Heart left ventricle (tissue), 16 donors: ENCODE measurements at regions of chr18 and their contacts with region 1.

Region 1: DNA sequence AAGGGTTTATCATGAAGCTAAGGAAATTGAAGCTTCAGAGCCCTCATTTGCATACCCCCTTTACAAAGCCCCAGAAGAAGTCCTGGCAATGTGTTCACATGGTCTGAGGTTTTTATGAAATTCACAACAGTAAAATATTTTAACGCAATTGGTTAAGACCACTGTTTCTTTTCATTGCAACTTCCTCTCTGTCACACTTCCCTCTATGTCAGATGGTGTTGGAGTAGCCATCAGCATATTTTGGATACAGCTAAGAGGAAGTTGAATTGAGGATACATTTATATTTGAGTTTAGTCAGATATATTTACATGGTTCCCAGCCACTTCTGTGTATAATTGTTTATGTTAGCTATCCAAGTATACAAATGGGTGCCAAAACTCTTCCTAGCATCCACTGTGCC is 170.0 kb downstream of the TXNL1 start:
- DNase-seq: no peak
- ATAC-seq: peak in 3 of 4 donors; percentile 45 to 68 (median 60)
- H3K4me3 ChIP-seq: no peak overlapping the region
- H3K27ac ChIP-seq: peak overlapping the region in 2 of 12 donors; percentile 36 to 87
- H3K4me1 ChIP-seq: peaks cover 0 to 17% (median 0%) of the 10 kb centered on the region in 12 donors
- H3K27me3 ChIP-seq: no peaks in the 10 kb centered on the region
- CTCF ChIP-seq: no peak
- POLR2A ChIP-seq: no peak

Region 2: GRCh38 chr18:56413862-56414261 is 54.5 kb before region 1 on chr18:
- intact Hi-C with region 1: no loop called
- DNase-seq: no peak
- ATAC-seq: no peak
- H3K4me3 ChIP-seq: no peak overlapping the region
- H3K27ac ChIP-seq: no peak overlapping the region
- H3K4me1 ChIP-seq: no peaks in the 10 kb centered on the region
- H3K27me3 ChIP-seq: no peaks in the 10 kb centered on the region
- CTCF ChIP-seq: no peak
- POLR2A ChIP-seq: no peak

Region 3: DNA sequence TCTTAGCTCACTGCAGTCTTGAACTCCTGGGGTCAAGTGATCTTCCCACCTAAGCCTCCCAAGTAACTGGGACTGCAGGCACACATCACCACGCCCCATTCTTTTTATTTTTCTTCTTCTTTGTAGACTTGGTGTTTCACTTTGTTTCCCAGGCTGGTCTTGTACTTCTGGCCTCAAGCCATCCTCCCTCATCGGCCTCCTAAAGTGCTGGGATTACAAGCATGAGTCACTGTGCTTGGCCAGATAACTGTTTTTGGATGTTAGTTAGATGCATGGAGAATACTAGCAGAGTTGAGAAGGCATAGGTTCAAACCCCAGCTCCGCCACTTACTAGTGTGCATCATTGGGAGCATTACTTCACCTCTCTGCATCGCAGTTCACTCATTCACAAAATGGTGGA is 81.7 kb after region 1 on chr18:
- intact Hi-C with region 1: loop called in 1 of 10 experiments (anchors 10 kb)
- DNase-seq: no peak
- ATAC-seq: no peak
- H3K4me3 ChIP-seq: no peak overlapping the region
- H3K27ac ChIP-seq: no peak overlapping the region
- H3K4me1 ChIP-seq: peaks cover 0 to 8% (median 0%) of the 10 kb centered on the region in 12 donors
- H3K27me3 ChIP-seq: no peaks in the 10 kb centered on the region
- CTCF ChIP-seq: no peak
- POLR2A ChIP-seq: no peak